ENCODE measurements at regions of chr6 and their contacts with region 1.

Region 1: GRCh38 chr6:49409951-49410542 is 53.0 kb downstream of the MMUT start:
- DNase-seq: peak; percentile 76
- H3K4me3 Mint-ChIP-seq: no peak overlapping the region
- H3K27ac Mint-ChIP-seq: no peak overlapping the region
- H3K4me1 Mint-ChIP-seq: no peaks in the 10 kb centered on the region
- H3K27me3 Mint-ChIP-seq: no peaks in the 10 kb centered on the region
- CTCF ChIP-seq: peak; percentile 83

Region 2: DNA sequence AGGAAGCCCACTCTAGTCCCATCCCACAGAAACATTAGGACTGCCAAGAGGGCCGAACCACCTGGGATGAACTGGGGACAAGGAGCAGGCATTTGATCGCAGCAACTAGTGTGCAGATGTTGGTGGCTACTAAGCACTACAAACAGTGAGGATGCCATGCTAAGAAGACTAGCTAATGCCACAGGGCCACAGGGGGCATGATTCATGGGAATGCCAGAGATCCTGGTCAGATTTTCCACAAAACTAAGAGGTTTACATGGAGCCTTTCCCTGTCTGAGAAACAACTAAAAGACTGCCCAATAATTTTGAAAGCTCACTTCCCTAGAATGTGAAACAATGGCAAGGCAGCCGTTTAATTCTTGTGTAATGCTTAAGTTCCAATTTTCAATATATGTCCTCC is 923.2 kb before region 1 on chr6:
- CTCF ChIA-PET with region 1: no interaction called
- POLR2A ChIA-PET with region 1: no interaction called
- intact Hi-C with region 1: loop called (anchors 10 kb)
- DNase-seq: no peak
- H3K4me3 Mint-ChIP-seq: no peak overlapping the region
- H3K27ac Mint-ChIP-seq: no peak overlapping the region
- H3K4me1 Mint-ChIP-seq: no peaks in the 10 kb centered on the region
- H3K27me3 Mint-ChIP-seq: no peaks in the 10 kb centered on the region
- CTCF ChIP-seq: no peak

Region 3: GRCh38 chr6:48765352-48765961 is 644.6 kb before region 1 on chr6:
- CTCF ChIA-PET with region 1: interaction called, 15 read pairs
- POLR2A ChIA-PET with region 1: interaction called, 5 read pairs
- intact Hi-C with region 1: loop called (anchors 1 kb)
- DNase-seq: peak; percentile 74
- H3K4me3 Mint-ChIP-seq: no peak overlapping the region
- H3K27ac Mint-ChIP-seq: peak overlapping the region; percentile 39
- H3K4me1 Mint-ChIP-seq: peaks cover 19% of the 10 kb centered on the region
- H3K27me3 Mint-ChIP-seq: no peaks in the 10 kb centered on the region
- CTCF ChIP-seq: peak; percentile 51

Region 4: DNA sequence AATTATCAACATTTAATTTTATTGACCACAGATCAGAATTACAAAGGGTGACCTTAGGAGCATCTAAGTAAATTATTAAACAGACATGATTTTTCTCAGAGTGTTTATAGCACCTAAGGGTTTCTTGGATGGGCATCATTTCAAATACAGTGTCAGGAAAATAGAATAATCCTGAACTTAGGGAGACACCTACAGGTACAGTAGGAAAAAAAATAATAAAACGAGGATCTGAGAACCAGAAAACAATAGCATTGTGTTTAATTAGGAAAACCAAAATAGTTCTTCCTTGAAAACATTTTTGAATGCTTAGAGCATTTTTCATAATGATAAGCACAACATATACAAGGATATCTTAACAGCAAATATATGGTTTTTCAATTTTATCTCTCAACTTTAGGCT is 13.8 kb after region 1 on chr6:
- CTCF ChIA-PET with region 1: interaction called, 10 read pairs
- POLR2A ChIA-PET with region 1: interaction called, 5 read pairs
- intact Hi-C with region 1: no loop called
- DNase-seq: peak; percentile 23
- H3K4me3 Mint-ChIP-seq: no peak overlapping the region
- H3K27ac Mint-ChIP-seq: no peak overlapping the region
- H3K4me1 Mint-ChIP-seq: no peaks in the 10 kb centered on the region
- H3K27me3 Mint-ChIP-seq: no peaks in the 10 kb centered on the region
- CTCF ChIP-seq: peak; percentile 43

Region 5: DNA sequence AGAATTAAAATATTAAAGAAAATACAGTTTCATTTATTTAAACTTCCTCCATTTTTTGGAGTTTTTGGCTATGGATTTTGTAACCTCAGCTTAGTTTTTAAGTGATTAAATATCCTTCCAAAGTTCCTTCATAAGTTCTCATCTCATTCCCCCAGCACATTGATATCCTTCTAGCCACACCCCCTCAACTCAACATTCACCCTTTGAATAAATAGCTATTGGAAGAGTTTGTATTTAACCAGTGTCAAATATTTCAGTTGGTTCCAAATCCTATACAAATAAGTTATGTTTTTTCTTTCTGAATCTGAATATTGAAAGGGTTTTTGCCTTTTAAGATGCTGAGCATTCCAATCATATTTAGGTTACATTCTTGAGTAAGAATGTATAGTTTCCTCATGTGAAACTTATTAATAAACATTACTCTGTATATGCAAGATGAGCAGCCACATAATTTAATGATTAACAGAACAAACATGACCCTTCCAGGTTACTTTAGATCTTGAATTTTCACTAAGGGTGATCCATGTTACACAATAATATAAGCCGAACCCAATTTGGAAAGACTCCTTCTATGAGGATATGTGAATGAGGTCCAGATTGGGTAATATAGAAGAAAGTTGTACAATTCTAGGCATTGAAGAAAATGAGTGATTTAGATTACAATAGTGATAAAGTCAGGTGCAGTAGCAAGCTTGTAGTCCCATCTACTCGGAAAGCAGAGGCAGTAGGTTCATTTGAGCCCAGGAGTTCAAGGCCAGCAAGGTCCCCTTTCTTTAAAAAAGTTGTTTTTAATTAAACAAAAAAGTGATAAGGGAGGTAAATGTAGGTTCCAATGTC is 103.3 kb after region 1 on chr6:
- CTCF ChIA-PET with region 1: no interaction called
- POLR2A ChIA-PET with region 1: no interaction called
- intact Hi-C with region 1: no loop called
- DNase-seq: no peak
- H3K4me3 Mint-ChIP-seq: no peak overlapping the region
- H3K27ac Mint-ChIP-seq: no peak overlapping the region
- H3K4me1 Mint-ChIP-seq: no peaks in the 10 kb centered on the region
- H3K27me3 Mint-ChIP-seq: no peaks in the 10 kb centered on the region
- CTCF ChIP-seq: no peak

Region 6: GRCh38 chr6:49646130-49646824 is 236.2 kb after region 1 on chr6:
- CTCF ChIA-PET with region 1: no interaction called
- POLR2A ChIA-PET with region 1: no interaction called
- intact Hi-C with region 1: no loop called
- DNase-seq: no peak
- H3K4me3 Mint-ChIP-seq: no peak overlapping the region
- H3K27ac Mint-ChIP-seq: no peak overlapping the region
- H3K4me1 Mint-ChIP-seq: no peaks in the 10 kb centered on the region
- H3K27me3 Mint-ChIP-seq: peaks cover 81% of the 10 kb centered on the region
- CTCF ChIP-seq: no peak

Region 7: GRCh38 chr6:49764571-49765236 is 354.7 kb after region 1 on chr6:
- CTCF ChIA-PET with region 1: no interaction called
- POLR2A ChIA-PET with region 1: no interaction called
- intact Hi-C with region 1: no loop called
- DNase-seq: no peak
- H3K4me3 Mint-ChIP-seq: no peak overlapping the region
- H3K27ac Mint-ChIP-seq: no peak overlapping the region
- H3K4me1 Mint-ChIP-seq: no peaks in the 10 kb centered on the region
- H3K27me3 Mint-ChIP-seq: peaks cover 15% of the 10 kb centered on the region
- CTCF ChIP-seq: no peak

Region 8: GRCh38 chr6:50549026-50549425 is 1139.0 kb after region 1 on chr6:
- CTCF ChIA-PET with region 1: no interaction called
- POLR2A ChIA-PET with region 1: no interaction called
- intact Hi-C with region 1: no loop called
- DNase-seq: no peak
- H3K4me3 Mint-ChIP-seq: no peak overlapping the region
- H3K27ac Mint-ChIP-seq: no peak overlapping the region
- H3K4me1 Mint-ChIP-seq: no peaks in the 10 kb centered on the region
- H3K27me3 Mint-ChIP-seq: peaks cover 12% of the 10 kb centered on the region
- CTCF ChIP-seq: no peak